Lower leg skin (tissue), 4 donors: ENCODE measurements at regions of chr5 and their contacts with region 1.

Region 1: GRCh38 chr5:151126199-151126645 is 31.4 kb downstream of the ANXA6 start:
- DNase-seq: peak; percentile 51 to 93
- H3K4me3 ChIP-seq: no peak overlapping the region
- CTCF ChIP-seq: peak in 1 of 3 donors; percentile 72
- POLR2A ChIP-seq: no peak

Region 2: DNA sequence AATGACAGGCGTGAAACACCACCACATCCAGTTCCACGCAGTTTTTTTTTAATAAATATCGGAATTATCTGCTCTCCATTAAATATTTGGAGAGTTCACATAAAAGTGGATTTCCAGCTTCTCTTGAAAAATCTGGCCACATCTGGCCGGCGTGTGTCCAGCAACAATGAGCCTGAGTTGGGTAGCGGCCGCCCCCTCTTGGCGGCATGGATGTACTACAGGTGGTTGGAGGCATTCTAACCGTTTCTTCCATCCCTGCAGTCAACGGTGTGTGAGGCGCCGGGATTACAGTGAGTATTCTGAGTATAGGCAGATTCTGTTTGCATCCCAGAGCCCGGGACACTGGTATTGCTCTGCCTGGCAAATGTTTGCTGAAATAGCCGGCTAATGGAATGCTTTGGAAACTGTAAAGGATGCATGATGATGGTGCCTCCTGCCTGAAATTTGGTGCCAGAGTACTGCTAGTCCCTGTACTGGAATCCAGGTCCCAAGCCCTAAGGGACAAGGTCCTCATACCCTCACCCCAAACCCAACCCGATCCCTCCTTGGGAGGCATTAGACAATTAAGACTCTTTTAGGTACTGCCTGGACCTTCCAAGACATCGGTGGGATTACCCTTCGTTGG is 113.1 kb after region 1 on chr5:
- intact Hi-C with region 1: loop called (anchors 10 kb)
- DNase-seq: peak in 1 of 2 donors; percentile 96
- H3K4me3 ChIP-seq: no peak overlapping the region
- CTCF ChIP-seq: peak in 1 of 3 donors; percentile 34
- POLR2A ChIP-seq: no peak

Region 3: DNA sequence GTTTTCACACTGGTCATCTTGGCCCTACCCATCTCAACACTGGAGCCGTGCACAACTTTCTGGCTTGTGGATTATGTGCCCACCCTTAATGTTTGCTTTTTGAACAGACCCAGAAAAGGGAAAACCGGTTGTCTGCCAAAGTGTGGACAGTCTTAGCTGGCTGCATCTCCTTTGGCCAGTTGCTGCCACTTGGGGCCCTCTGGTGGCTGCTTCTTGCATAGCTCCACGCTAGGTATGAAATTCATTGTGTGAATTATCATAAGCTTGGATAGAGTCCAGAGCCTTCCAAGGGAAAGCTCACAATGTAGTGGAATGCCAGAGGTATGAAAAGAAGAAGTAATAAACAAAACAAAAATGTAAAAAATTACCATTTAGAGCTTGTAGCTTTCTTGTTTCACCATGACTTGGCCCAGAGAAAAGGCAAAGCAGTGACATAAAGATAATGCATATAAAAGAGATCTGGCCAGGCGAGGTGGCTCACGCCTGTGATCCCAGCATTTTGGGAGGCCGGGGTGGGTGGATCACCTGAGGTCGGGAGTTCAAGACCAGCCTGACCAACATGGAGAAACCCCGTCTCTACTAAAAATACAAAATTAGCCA is 189.9 kb after region 1 on chr5:
- intact Hi-C with region 1: loop called (anchors 10 kb)
- DNase-seq: peak; percentile 64 to 91
- H3K4me3 ChIP-seq: no peak overlapping the region
- CTCF ChIP-seq: no peak
- POLR2A ChIP-seq: no peak